Activated naive CD4-positive, alpha-beta T cell treated with anti-CD3 and anti-CD28 coated beads, Interleukin-2, amount 10 ng/mL, durations not matched to agents 7 days and 5 days (primary cell): ENCODE measurements at regions of chr3 and their contacts with region 1.

Region 1: DNA sequence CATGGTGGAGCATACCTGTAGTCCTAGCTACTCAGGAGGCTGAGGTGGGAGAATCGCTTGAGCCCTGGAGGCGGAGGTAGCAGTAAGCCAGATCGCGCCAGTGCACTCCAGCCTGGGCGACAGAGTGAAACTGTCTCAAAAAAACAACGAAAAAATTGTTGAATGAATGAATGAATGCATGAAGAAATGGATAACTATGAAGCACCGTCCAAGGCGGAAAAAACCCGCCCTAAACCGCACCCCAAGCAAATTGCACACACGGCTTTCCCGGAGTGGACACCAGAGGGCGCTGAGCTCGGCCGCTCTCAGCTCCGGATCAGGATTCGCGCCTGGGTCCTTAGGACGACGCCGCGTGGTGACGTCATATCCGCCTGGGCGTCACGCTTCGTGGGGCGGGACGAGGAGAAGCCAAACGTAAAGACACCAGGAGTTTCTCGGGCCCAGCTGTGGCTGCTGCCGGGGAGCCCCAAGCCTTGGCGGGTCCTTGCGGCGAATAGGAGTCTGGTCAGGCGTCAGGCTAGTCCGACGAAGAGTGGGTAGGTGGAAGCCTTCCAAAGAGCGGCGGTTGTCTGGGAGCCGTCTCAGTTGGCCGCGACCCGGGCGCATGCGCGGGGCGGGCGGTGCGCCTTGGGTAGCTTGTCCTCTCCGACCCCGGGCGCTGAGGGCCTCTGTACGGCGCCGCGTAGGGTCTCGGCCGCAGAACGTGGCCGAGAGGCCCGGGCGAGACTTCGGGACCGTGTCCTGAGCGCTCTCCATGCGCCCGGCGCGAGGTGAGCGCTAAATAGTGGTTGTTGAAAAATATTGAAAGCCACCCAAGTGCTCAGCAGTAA is at the starts of genes HTD2 and RPP14:
- DNase-seq: peak; percentile 99
- H3K4me3 Mint-ChIP-seq: peak within 1 kb of the TSS; percentile 94
- H3K27ac Mint-ChIP-seq: peak within 1 kb of the TSS; percentile 99
- H3K4me1 Mint-ChIP-seq: peaks cover 36% of the 10 kb centered on the region
- H3K27me3 Mint-ChIP-seq: peaks cover 21% of the 10 kb centered on the region

Region 2: DNA sequence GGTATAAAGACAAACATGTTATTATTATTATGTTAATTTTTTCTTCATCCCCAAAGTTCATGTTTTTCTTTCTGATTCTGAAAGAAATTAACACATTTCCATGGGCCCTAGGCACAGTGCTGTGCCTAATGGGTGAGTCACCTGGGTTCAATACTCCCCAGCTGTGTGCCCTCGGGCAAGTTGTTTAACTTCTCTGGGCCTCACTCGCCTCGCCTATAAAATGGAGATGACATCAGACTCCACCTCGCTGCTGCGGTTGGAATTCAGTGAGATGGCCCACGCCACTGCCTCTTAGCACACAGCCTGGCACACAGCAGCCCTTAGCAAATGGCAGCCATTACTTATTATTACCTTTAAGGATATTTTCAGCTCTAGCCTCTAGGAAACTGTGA is 117.9 kb before region 1 on chr3:
- CTCF ChIA-PET with region 1: interaction called, 43 read pairs
- DNase-seq: no peak
- H3K4me3 Mint-ChIP-seq: no peak overlapping the region
- H3K27ac Mint-ChIP-seq: no peak overlapping the region
- H3K4me1 Mint-ChIP-seq: peaks cover 4% of the 10 kb centered on the region
- H3K27me3 Mint-ChIP-seq: peaks cover 9% of the 10 kb centered on the region

Region 3: DNA sequence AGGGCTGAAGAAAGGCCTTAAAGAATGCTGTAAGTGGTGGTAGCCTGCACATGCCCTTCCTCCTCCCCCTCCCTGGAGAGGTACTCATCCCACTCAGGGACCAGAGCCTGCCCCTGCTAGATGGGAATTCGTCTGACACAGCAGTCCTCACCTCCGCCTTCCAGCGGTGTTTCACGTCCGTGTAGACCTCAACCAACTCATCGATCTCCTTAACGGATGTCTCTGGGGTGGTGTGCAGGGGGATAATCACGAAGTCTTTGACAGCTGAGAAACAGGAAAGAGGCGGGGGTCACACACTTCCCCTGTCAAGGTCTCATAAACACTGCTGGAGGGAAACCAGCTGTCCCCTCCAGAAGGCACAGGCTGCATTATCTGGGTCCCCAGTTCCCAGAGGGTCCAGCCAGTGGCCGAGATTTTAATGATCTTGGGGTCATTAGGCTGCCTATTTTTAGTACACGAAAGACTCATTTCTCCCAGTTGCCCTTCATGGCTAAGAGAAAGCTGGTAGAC is 105.2 kb before region 1 on chr3:
- CTCF ChIA-PET with region 1: no interaction called
- DNase-seq: no peak
- H3K4me3 Mint-ChIP-seq: no peak overlapping the region
- H3K27ac Mint-ChIP-seq: no peak overlapping the region
- H3K4me1 Mint-ChIP-seq: peaks cover 9% of the 10 kb centered on the region
- H3K27me3 Mint-ChIP-seq: peaks cover 43% of the 10 kb centered on the region

Region 4: DNA sequence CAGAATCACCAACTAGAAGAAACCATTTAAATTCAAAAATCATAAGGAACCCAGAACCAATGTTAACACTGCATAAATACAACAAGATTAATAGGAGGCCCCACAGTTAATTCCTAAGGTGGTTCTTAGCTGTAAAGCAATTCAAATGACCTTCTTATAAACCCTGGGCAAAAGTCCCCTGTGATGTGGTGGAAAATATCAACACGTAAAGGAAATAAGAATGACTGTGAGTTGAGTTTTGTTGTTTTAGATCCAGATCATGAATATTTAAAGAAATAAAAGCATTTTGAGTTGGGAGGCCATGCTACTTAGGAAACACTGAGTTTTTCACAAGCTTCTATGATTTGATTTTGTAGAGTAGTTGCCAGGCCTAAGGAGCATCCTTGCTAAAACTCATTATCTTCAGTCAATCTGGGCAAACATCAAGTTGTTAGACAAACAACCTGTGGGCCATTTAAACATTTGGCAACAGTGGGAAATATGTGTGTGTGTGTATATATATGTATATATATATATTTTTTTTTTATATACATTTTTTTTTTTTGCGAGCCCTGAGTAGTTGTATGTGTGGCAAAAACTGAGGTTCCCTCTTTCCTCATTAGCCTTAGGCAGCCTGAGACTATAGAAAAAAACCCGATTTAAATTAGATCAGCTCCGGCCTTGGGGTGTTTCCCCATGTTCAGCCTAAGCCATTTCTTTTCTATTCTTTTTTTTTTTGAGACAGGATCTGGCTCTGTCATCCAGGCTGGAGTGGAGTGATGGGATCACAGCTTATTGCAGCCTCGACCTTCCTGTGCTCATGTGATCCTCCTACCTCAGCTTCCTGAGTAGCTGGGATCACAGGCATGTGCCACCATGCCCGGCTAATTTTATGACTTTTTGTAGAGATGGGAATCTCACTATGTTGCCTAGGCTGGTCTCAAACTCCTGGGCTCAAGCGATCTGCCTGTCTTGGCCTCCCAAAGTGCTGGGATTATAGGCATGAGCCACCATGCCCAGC is 18.6 kb after region 1 on chr3:
- CTCF ChIA-PET with region 1: interaction called, 54 read pairs
- DNase-seq: no peak
- H3K4me3 Mint-ChIP-seq: no peak overlapping the region
- H3K27ac Mint-ChIP-seq: peak overlapping the region; percentile 62
- H3K4me1 Mint-ChIP-seq: peaks cover 28% of the 10 kb centered on the region
- H3K27me3 Mint-ChIP-seq: no peaks in the 10 kb centered on the region

Region 5: DNA sequence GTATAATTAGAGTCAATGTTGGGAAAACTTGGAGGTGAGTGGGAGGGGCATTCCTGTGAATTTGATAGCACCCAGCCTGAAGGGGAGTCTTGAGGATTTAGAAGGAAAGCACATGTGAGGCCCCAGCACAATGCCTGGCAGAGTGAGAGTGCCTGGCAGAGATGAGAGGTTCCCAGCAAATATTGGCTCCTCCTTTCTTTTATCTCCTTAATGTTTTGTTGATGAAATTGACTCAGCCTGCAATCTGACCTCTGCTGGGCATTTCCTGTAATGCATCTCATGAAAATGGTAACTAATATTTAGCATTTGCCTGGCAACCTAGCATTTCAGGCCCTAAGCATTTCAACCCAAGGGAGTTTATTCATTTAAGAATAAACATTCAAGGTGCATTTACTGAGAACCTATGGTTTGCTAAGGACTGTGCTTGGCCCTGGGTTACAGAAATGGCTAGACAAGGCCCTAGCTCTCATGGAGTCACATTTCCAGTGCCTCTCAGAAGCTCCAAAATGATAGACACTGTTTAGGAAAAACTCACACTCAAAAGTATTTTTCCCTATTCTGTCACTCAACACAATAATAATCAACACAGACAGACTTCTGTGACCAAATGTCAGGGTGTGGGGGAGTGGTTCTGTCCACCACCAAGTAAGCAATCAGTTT is 108.6 kb after region 1 on chr3:
- CTCF ChIA-PET with region 1: interaction called, 18 read pairs
- DNase-seq: peak; percentile 64
- H3K4me3 Mint-ChIP-seq: no peak overlapping the region
- H3K27ac Mint-ChIP-seq: no peak overlapping the region
- H3K4me1 Mint-ChIP-seq: peaks cover 6% of the 10 kb centered on the region
- H3K27me3 Mint-ChIP-seq: no peaks in the 10 kb centered on the region

Region 6: GRCh38 chr3:58526515-58526957 is 220.4 kb after region 1 on chr3:
- CTCF ChIA-PET with region 1: interaction called, 46 read pairs
- DNase-seq: no peak
- H3K4me3 Mint-ChIP-seq: no peak overlapping the region
- H3K27ac Mint-ChIP-seq: no peak overlapping the region
- H3K4me1 Mint-ChIP-seq: no peaks in the 10 kb centered on the region
- H3K27me3 Mint-ChIP-seq: peaks cover 8% of the 10 kb centered on the region

Region 7: GRCh38 chr3:58630076-58630709 is 324.1 kb after region 1 on chr3:
- CTCF ChIA-PET with region 1: interaction called, 11 read pairs
- DNase-seq: peak; percentile 72
- H3K4me3 Mint-ChIP-seq: no peak overlapping the region
- H3K27ac Mint-ChIP-seq: no peak overlapping the region
- H3K4me1 Mint-ChIP-seq: peaks cover 2% of the 10 kb centered on the region
- H3K27me3 Mint-ChIP-seq: peaks cover 14% of the 10 kb centered on the region